ENCODE measurements at regions of chr10 and their contacts with region 1.

Region 1: DNA sequence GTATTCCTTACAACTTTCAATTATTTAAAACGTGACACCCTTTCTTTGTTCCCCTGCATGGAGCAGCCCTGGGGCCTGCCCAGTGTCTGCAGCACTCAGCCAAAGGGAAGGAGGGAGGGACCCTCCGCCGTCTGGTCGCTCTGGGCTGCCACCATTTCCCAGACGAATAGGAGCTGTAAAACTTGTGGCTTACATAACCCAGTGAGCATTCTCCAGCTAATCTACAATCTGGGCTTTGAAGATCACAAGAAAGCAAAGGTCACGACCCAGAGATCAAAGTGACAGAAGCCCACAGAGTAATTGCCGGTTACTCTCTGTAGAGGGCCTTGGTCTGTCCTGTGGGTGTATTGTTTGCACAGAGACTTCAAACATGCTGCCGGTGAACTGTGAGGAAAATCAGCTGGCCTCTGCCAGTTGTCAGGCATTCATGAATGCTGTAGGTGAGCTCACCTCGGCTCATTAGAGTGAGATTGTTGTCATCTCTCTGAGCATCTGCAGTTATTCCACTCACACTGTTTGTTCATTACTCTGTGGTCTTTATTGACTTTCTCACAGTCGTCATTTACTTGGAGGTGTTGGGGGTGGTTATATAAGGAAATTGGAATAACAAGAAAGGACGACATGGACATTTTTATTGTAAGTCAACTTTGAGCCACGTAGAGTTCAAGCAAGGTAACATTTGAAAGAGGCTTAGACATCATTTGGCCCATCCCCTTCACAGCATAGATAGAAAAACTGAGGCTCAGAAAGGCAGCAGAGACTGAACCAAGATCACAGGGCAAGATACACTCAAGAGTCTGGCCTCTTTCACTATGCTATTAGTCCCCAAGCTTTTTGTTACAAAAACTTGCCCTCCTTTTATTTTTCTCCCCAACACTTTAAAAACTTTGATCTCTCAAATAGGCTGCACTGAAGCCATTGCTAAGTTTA is 619.8 kb downstream of the LRMDA start:
- DNase-seq: peak; percentile 95 to 97
- H3K4me3 ChIP-seq: no peak overlapping the region
- H3K4me3 Mint-ChIP-seq: peak overlapping the region; percentile 56
- H3K27ac Mint-ChIP-seq: peak overlapping the region; percentile 93
- H3K4me1 ChIP-seq: peaks cover 39% of the 10 kb centered on the region
- H3K4me1 Mint-ChIP-seq: peaks cover 36% of the 10 kb centered on the region
- H3K27me3 ChIP-seq: no peaks in the 10 kb centered on the region
- H3K27me3 Mint-ChIP-seq: no peaks in the 10 kb centered on the region
- CTCF ChIP-seq: peak in 1 of 2 experiments; percentile 17

Region 2: DNA sequence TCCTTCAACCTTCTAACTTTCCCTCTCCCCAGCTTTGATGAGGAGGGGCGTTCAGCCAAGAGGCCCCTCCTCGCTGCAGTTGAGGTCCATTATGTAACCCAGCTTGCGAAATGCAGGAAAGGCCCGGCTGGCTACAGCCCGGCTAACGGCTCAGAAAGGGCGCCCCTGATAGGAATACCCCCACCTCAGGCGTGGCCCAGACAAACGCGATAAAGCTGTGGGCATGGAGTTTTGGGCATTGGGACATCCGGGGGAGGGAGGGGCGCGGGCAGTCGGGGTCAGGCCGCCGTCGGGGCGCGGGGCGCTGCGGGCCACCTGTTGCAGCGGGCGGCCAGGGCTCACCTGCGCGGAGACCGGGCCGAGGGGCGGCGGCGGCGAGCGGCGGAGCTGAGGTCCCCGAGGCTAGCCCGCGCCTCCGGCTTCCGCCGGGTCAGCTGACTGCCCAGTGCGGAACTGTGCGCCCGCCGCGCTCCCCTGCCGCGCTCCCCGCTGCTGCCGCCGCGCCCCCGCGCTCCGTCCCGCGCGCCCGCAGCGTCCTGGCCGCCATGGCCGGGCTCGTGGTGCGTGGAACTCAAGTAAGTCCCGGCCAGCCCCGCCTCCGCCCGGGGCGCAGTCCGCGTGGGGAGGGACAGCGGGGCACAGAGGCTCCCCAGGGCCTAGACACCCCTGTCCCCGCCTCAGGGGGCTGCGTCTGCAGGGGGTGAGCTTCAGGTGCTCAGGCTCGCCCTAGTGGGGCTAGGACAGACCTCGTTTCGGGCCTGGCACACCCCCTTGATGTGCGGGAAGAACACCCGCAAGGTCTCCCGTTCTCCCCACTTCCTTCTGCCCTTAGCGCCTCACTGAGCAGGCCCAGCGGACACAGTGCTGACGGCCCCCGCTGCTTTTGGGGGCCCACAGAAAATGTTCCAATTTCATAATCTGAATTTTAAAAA is 619.8 kb before region 1 on chr10 and contains the start of gene LRMDA:
- CTCF ChIA-PET with region 1: no interaction called
- POLR2A ChIA-PET with region 1: no interaction called
- intact Hi-C with region 1: loop called (anchors 1 kb)
- DNase-seq: peak; percentile 71 to 77
- H3K4me3 ChIP-seq: peak within 1 kb of the TSS; percentile 80
- H3K4me3 Mint-ChIP-seq: peak within 1 kb of the TSS; percentile 72
- H3K27ac Mint-ChIP-seq: peak within 1 kb of the TSS; percentile 84
- H3K4me1 ChIP-seq: peaks cover 52% of the 10 kb centered on the region
- H3K4me1 Mint-ChIP-seq: peaks cover 44% of the 10 kb centered on the region
- H3K27me3 ChIP-seq: no peaks in the 10 kb centered on the region
- H3K27me3 Mint-ChIP-seq: no peaks in the 10 kb centered on the region
- CTCF ChIP-seq: no peak
- total RNA-seq, gene LRMDA: 18.5 and 21.6 TPM in 2 replicates

Region 3: DNA sequence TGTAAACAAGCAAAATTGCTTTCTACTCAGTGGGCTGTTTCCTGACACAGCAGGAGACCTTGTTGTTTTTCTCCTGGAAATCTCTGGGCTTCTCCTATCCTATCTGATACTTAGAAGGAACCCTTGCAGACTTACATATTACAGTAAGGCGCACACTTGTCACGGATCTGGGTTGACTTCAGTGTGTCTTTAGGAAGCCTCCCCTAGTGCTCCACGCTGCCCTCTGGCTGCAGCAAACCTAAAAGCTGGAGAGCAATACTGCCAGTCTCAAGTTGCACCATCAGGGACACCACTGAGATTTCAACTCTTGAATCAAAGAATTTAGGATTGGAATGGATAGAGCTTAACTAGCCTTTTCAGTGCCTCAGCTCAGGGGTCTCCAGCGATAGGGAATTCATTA is 124.5 kb before region 1 on chr10:
- CTCF ChIA-PET with region 1: no interaction called
- POLR2A ChIA-PET with region 1: no interaction called
- intact Hi-C with region 1: no loop called
- DNase-seq: no peak
- H3K4me3 ChIP-seq: no peak overlapping the region
- H3K4me3 Mint-ChIP-seq: no peak overlapping the region
- H3K27ac Mint-ChIP-seq: no peak overlapping the region
- H3K4me1 ChIP-seq: no peaks in the 10 kb centered on the region
- H3K4me1 Mint-ChIP-seq: no peaks in the 10 kb centered on the region
- H3K27me3 ChIP-seq: no peaks in the 10 kb centered on the region
- H3K27me3 Mint-ChIP-seq: no peaks in the 10 kb centered on the region
- CTCF ChIP-seq: no peak

Region 4: GRCh38 chr10:76086761-76087639 is 35.7 kb after region 1 on chr10:
- CTCF ChIA-PET with region 1: interaction called, 8 read pairs
- POLR2A ChIA-PET with region 1: no interaction called
- intact Hi-C with region 1: loop called (anchors 1 kb)
- DNase-seq: peak; percentile 68 to 74
- H3K4me3 ChIP-seq: no peak overlapping the region
- H3K4me3 Mint-ChIP-seq: no peak overlapping the region
- H3K27ac Mint-ChIP-seq: peak overlapping the region; percentile 34
- H3K4me1 ChIP-seq: peaks cover 15% of the 10 kb centered on the region
- H3K4me1 Mint-ChIP-seq: peaks cover 6% of the 10 kb centered on the region
- H3K27me3 ChIP-seq: no peaks in the 10 kb centered on the region
- H3K27me3 Mint-ChIP-seq: no peaks in the 10 kb centered on the region
- CTCF ChIP-seq: peak; percentile 72 to 79

Region 5: DNA sequence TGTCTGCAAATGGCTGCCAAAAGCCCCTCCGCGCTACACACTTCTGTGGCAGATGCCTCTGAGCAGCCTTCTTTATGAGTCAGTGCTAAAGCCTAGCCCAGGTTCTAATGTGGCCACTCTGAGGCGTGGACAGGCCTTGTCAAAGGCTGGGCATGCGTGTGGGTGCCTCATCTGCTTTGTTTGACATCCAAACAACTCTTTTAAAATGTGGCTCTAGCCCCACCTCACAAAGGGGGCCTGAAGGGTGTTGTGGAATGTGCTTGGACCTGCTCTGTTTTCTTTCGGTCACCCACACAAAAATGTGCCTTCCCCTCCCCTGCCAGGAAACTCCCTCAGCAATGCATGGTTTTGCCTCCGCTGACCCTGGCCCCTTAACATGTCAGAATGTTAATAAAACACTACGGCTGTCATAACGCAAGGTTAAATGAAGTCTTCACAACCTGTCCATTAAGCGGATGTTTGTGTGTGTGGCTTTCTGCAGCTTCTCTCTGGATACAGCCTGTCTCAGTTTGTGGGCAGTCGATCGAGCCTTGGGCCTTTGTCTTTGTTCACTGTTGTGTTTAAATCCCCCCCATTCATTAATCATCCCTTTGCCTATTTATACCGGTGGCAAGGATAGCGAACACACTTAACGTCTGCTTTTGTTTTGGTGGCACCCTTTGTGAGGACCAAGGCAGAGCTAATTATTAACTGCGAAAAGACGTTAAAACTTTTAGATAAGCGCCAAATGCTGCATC is 99.0 kb after region 1 on chr10:
- CTCF ChIA-PET with region 1: no interaction called
- POLR2A ChIA-PET with region 1: interaction called, 3 read pairs
- intact Hi-C with region 1: loop called (anchors 1 kb)
- DNase-seq: peak; percentile 93 to 95
- H3K4me3 ChIP-seq: peak overlapping the region; percentile 17; the same call in 1 of the 2 replicates
- H3K4me3 Mint-ChIP-seq: peak overlapping the region; percentile 68
- H3K27ac Mint-ChIP-seq: peak overlapping the region; percentile 99
- H3K4me1 ChIP-seq: peaks cover 26% of the 10 kb centered on the region
- H3K4me1 Mint-ChIP-seq: peaks cover 28% of the 10 kb centered on the region
- H3K27me3 ChIP-seq: no peaks in the 10 kb centered on the region
- H3K27me3 Mint-ChIP-seq: no peaks in the 10 kb centered on the region
- CTCF ChIP-seq: no peak

Region 6: DNA sequence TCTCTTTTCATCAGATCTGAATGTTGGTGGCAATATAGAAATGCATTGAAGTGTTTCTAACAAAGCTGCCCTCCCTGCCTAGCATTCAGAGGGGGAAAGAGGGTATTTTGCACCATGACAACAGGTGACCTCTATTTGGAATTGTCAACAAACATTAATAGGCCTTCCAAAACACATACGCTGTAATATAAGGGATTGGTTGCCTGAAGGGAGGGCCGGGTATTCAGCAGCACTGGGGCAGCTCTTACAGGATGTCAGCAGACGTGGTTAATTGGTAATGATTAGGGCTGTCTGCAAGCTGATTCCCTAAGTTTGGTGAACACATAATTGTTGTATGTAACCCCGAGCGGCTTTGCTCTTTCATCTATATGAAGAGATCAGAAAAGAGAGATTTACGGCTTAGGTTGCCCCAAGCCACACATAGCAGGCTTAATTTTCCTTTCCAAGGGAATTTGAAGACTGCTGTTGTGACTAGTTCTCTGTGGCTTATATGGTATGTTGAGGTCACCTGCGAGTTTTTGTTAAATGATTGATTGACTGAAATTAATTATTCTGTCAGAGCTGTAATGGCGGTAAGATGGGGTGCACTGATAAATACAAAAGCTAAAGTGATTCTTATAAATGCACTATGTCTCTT is 139.5 kb after region 1 on chr10:
- CTCF ChIA-PET with region 1: no interaction called
- POLR2A ChIA-PET with region 1: interaction called, 4 read pairs
- intact Hi-C with region 1: loop called (anchors 1 kb)
- DNase-seq: peak; percentile 72 to 78
- H3K4me3 ChIP-seq: no peak overlapping the region
- H3K4me3 Mint-ChIP-seq: peak overlapping the region; percentile 53
- H3K27ac Mint-ChIP-seq: peak overlapping the region; percentile 92
- H3K4me1 ChIP-seq: peaks cover 47% of the 10 kb centered on the region
- H3K4me1 Mint-ChIP-seq: peaks cover 26% of the 10 kb centered on the region
- H3K27me3 ChIP-seq: no peaks in the 10 kb centered on the region
- H3K27me3 Mint-ChIP-seq: no peaks in the 10 kb centered on the region
- CTCF ChIP-seq: no peak